Gastrocnemius medialis (tissue), 4 donors: ENCODE measurements at regions of chr20 and their contacts with region 1.

Region 1: GRCh38 chr20:15419856-15420255 is 1082.4 kb upstream of the FLRT3 start:
- DNase-seq: no peak
- ATAC-seq: no peak
- H3K4me3 ChIP-seq: no peak overlapping the region
- H3K27ac ChIP-seq: no peak overlapping the region
- H3K4me1 ChIP-seq: no peaks in the 10 kb centered on the region
- H3K27me3 ChIP-seq: no peaks in the 10 kb centered on the region
- CTCF ChIP-seq: no peak
- POLR2A ChIP-seq: no peak

Region 2: GRCh38 chr20:15039103-15039752 is 380.6 kb before region 1 on chr20:
- in situ Hi-C with region 1: no loop called
- intact Hi-C with region 1: no loop called
- DNase-seq: no peak
- ATAC-seq: no peak
- H3K4me3 ChIP-seq: no peak overlapping the region
- H3K27ac ChIP-seq: no peak overlapping the region
- H3K4me1 ChIP-seq: no peaks in the 10 kb centered on the region
- H3K27me3 ChIP-seq: no peaks in the 10 kb centered on the region
- CTCF ChIP-seq: no peak
- POLR2A ChIP-seq: no peak

Region 3: DNA sequence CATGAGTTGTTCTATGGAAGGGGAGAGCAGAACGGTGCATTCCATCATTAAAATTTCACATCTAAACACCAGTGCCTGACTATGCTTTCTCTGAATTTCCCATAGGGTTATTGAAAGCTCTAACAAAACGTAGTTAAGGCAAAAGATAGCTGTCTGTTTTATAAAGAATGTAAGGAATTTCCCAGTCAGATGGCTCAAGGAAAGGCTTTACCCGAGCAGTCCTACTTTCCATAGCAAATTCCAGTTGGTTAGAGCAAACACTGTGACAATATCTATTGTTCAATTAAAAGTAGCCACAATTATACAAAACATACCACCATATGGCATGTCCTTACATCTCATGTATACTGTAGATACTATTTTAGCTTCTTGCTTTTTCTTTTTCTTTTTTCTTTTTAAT is 23.0 kb before region 1 on chr20:
- in situ Hi-C with region 1: no loop called
- intact Hi-C with region 1: no loop called
- DNase-seq: no peak
- ATAC-seq: no peak
- H3K4me3 ChIP-seq: no peak overlapping the region
- H3K27ac ChIP-seq: no peak overlapping the region
- H3K4me1 ChIP-seq: no peaks in the 10 kb centered on the region
- H3K27me3 ChIP-seq: no peaks in the 10 kb centered on the region
- CTCF ChIP-seq: no peak
- POLR2A ChIP-seq: no peak

Region 4: GRCh38 chr20:15487030-15487429 is 67.2 kb after region 1 on chr20:
- in situ Hi-C with region 1: loop called in 1 of 4 experiments (anchors 10 kb)
- intact Hi-C with region 1: no loop called
- DNase-seq: no peak
- ATAC-seq: no peak
- H3K4me3 ChIP-seq: no peak overlapping the region
- H3K27ac ChIP-seq: no peak overlapping the region
- H3K4me1 ChIP-seq: no peaks in the 10 kb centered on the region
- H3K27me3 ChIP-seq: no peaks in the 10 kb centered on the region
- CTCF ChIP-seq: no peak
- POLR2A ChIP-seq: no peak

Region 5: DNA sequence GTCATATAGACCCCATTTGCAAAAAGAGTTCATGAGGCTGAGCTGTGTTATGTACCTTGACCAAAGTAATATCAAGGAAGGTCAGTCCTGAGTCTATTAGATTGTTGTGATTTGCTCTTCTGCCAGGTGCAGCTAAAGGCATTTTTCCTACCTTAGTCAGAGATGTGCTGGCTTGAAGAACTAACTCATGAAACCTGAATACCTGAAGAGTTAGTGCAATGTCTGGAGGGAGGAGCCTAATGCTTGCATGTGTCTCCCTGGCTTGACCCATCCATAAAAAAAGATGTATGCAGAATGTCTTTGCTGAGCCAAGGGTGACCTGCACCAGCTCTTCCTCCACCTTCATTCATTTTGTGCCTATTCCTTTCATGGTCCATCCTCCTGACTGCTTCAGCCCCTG is 411.3 kb after region 1 on chr20:
- in situ Hi-C with region 1: no loop called
- intact Hi-C with region 1: no loop called
- DNase-seq: no peak
- ATAC-seq: no peak
- H3K4me3 ChIP-seq: no peak overlapping the region
- H3K27ac ChIP-seq: no peak overlapping the region
- H3K4me1 ChIP-seq: no peaks in the 10 kb centered on the region
- H3K27me3 ChIP-seq: no peaks in the 10 kb centered on the region
- CTCF ChIP-seq: no peak
- POLR2A ChIP-seq: no peak